ENCODE measurements at regions of chr4 and their contacts with region 1.

Region 1: DNA sequence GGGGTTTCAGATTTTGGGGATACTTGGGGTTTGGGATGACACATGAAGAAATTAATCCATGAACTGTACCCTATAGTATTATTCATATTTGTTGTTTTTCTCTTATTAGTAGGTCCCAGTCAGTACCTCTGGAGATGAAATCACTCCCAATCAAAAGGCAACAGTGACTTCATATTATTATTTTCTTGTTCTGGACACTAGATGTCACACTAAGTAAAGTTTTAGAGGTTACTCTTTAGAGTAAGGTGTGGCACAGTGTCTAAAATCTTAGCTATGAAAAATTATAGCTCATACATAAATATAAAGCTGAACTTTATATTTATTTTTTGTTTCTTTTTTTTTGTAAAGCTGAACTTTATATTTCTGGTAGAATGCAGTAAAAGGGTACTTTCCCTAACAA is 35.1 kb downstream of the FAM114A1 start:
- DNase-seq: no peak
- ATAC-seq: peak; percentile 82
- H3K4me3 ChIP-seq: no peak overlapping the region
- H3K27ac ChIP-seq: no peak overlapping the region
- H3K4me1 ChIP-seq: no peaks in the 10 kb centered on the region
- H3K27me3 ChIP-seq: no peaks in the 10 kb centered on the region
- CTCF ChIP-seq: peak; percentile 26; the same call in 1 of the 2 replicates

Region 2: GRCh38 chr4:39134683-39135319 is 232.1 kb after region 1 on chr4:
- CTCF ChIA-PET with region 1: interaction called, 12 read pairs
- POLR2A ChIA-PET with region 1: no interaction called
- in situ Hi-C with region 1: no loop called
- intact Hi-C with region 1: loop called (anchors 5 kb)
- DNase-seq: no peak
- ATAC-seq: peak; percentile 49
- H3K4me3 ChIP-seq: no peak overlapping the region
- H3K27ac ChIP-seq: no peak overlapping the region
- H3K4me1 ChIP-seq: no peaks in the 10 kb centered on the region
- H3K27me3 ChIP-seq: no peaks in the 10 kb centered on the region
- CTCF ChIP-seq: no peak